HepG2 (cell line): ENCODE measurements at regions of chr15 and their contacts with region 1.

Region 1: GRCh38 chr15:69357773-69358771 is 56.1 kb upstream of the KIF23 start:
- DNase-seq: peak; percentile 76
- ATAC-seq: peak; percentile 97
- H3K4me3 ChIP-seq: no peak overlapping the region
- H3K27ac ChIP-seq: no peak overlapping the region
- H3K4me1 ChIP-seq: peaks cover 25% of the 10 kb centered on the region
- H3K27me3 ChIP-seq: no peaks in the 10 kb centered on the region; a peak in 2 of 5 replicates
- CTCF ChIP-seq: no peak
- EP300 ChIP-seq: no peak
- POLR2A ChIP-seq: no peak
- RAD21 ChIP-seq: no peak

Region 2: GRCh38 chr15:69394556-69395282 is 36.6 kb after region 1 on chr15:
- CTCF ChIA-PET with region 1: no interaction called
- POLR2A ChIA-PET with region 1: no interaction called
- in situ Hi-C with region 1: no loop called
- intact Hi-C with region 1: loop called (anchors 1 kb)
- DNase-seq: peak; percentile 31
- ATAC-seq: peak; percentile 92
- H3K4me3 ChIP-seq: no peak overlapping the region; a peak in 1 of 6 replicates
- H3K27ac ChIP-seq: no peak overlapping the region
- H3K4me1 ChIP-seq: peaks cover 26% of the 10 kb centered on the region
- H3K27me3 ChIP-seq: peaks cover 2 to 22% of the 10 kb centered on the region in 2 experiments; a peak in 4 of 5 replicates
- CTCF ChIP-seq: peak; percentile 94
- EP300 ChIP-seq: no peak
- POLR2A ChIP-seq: no peak
- RAD21 ChIP-seq: peak; percentile 85